Prostate gland (tissue), 2 donors: ENCODE measurements at regions of chr10 and their contacts with region 1.

Region 1: DNA sequence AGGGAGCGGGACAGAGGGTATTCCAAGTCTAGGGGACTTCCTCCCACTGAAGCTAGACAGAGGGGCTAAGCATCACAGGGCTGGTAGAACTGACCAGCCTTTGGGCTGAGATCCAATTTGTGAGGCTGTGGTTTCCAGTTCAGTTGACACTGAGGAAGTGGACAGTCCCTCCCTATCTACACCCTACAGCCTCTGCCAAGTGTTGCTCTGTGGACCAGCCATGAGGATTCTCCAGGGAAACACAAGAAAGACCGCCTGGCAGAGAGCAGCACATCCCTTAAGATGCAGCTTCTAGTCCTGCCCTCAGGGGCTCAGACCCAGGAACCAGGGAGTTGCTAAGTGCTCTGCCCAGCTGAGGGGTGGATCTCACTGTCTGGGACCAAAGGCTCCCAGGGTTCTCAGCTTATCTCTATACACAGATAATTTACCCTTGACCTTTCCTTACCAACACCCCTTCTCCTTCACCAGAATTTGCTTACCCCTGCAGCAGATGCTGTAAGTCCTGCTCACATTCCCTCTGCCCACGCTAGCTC is 252.0 kb downstream of the SKIDA1 start:
- DNase-seq: no peak
- H3K4me3 ChIP-seq: no peak overlapping the region
- H3K27ac ChIP-seq: no peak overlapping the region
- H3K4me1 ChIP-seq: no peaks in the 10 kb centered on the region
- H3K27me3 ChIP-seq: no peaks in the 10 kb centered on the region
- CTCF ChIP-seq: no peak
- POLR2A ChIP-seq: no peak

Region 2: GRCh38 chr10:20858292-20859124 is 415.0 kb before region 1 on chr10:
- intact Hi-C with region 1: loop called (anchors 5 kb)
- DNase-seq: no peak
- H3K4me3 ChIP-seq: no peak overlapping the region
- H3K27ac ChIP-seq: no peak overlapping the region
- H3K4me1 ChIP-seq: no peaks in the 10 kb centered on the region
- H3K27me3 ChIP-seq: no peaks in the 10 kb centered on the region
- CTCF ChIP-seq: peak in 3 of 4 experiments; percentile 44 to 66 (median 61)
- POLR2A ChIP-seq: no peak

Region 3: GRCh38 chr10:21078410-21079329 is 194.8 kb before region 1 on chr10:
- intact Hi-C with region 1: loop called (anchors 1 kb)
- DNase-seq: peak; percentile 69
- H3K4me3 ChIP-seq: no peak overlapping the region
- H3K27ac ChIP-seq: no peak overlapping the region
- H3K4me1 ChIP-seq: no peaks in the 10 kb centered on the region
- H3K27me3 ChIP-seq: no peaks in the 10 kb centered on the region
- CTCF ChIP-seq: peak; percentile 36 to 79 (median 76)
- POLR2A ChIP-seq: no peak